Mucosa of descending colon (tissue), 3 donors: ENCODE measurements at regions of chr2 and their contacts with region 1.

Region 1: DNA sequence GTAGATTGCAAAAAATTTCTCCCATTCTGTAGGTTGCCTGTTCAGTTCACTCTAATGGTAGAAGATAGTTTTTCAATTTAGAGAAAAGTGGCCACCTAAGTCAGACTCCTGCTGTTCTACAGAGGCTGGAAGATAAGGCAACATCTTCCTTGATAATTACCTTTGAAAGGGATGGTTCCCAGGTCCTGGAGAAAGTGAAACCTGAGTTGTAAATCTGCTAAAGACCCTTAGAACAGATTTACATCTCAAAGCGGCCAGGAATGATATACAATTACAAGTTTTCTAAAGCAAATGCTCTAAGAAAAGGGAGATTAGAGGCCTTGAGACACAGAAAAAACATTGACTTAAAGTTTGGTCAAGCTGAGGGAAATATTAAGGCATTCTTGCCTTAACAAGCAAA is 1350.2 kb upstream of the FAM98A start:
- DNase-seq: no peak
- ATAC-seq: no peak
- H3K4me3 ChIP-seq: no peak overlapping the region
- H3K4me1 ChIP-seq: no peaks in the 10 kb centered on the region
- CTCF ChIP-seq: no peak

Region 2: DNA sequence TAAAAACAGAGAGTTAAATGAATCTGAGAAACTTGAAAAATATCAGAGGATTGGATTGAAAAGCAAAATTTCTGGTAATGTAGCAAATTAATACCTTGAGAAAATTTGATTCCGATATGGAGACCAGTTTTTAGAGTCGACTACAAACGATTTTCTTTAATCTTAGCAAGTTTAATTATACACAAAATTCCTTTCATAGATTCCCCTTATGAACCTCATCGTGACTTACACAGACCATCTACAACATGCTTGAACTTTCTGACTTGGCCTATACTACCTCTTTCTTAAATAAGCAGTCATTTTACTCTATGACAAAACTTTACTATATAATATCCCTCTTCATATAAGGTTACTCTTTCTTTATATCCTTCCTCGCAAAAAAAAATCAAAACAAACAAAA is 636.7 kb after region 1 on chr2:
- intact Hi-C with region 1: loop called in 1 of 2 experiments (anchors 10 kb)
- DNase-seq: no peak
- ATAC-seq: no peak
- H3K4me3 ChIP-seq: no peak overlapping the region
- H3K4me1 ChIP-seq: no peaks in the 10 kb centered on the region
- CTCF ChIP-seq: no peak